ENCODE measurements at regions of chr2 and their contacts with region 1.

Region 1: GRCh38 chr2:160406591-160407392 is 86.8 kb downstream of the RBMS1 start:
- DNase-seq: peak; percentile 57
- H3K4me3 ChIP-seq: peak overlapping the region; percentile 90
- H3K4me3 Mint-ChIP-seq: peak overlapping the region; percentile 75
- H3K27ac Mint-ChIP-seq: peak overlapping the region; percentile 95
- H3K4me1 ChIP-seq: peaks cover 38% of the 10 kb centered on the region
- H3K4me1 Mint-ChIP-seq: peaks cover 48% of the 10 kb centered on the region
- H3K27me3 ChIP-seq: no peaks in the 10 kb centered on the region
- H3K27me3 Mint-ChIP-seq: no peaks in the 10 kb centered on the region
- CTCF ChIP-seq: no peak

Region 2: DNA sequence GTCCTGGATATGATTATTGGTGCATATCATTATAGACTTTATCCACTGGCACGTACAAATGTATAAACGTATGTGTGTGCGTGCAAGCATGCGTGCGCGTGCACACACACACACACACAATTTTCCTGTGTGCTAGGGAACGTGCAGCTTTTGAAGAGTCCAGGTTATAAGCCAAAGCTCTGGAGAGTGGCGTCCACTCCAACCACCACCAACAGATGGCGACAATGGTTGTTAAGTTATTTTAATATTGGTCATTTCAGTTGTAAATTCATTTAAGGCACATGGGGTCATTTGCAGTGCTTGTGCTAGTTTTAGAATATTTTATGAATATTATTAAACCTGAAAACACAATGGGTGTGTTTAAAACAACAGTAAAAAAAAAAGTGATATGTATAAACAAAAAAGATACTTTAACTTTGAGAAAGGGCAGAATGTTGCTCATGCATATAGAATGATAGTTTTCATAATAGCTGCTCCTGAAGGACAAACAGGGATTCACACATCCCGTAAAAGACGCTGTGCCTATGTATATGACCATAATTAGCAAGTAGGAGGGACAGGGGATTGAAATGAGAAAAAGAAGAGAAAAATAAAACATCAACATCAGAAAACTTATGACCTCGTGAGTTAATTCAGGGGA is 82.5 kb before region 1 on chr2:
- CTCF ChIA-PET with region 1: no interaction called
- POLR2A ChIA-PET with region 1: no interaction called
- intact Hi-C with region 1: loop called (anchors 2 kb)
- DNase-seq: peak; percentile 47 to 66
- H3K4me3 ChIP-seq: no peak overlapping the region
- H3K4me3 Mint-ChIP-seq: no peak overlapping the region
- H3K27ac Mint-ChIP-seq: no peak overlapping the region
- H3K4me1 ChIP-seq: peaks cover 13% of the 10 kb centered on the region
- H3K4me1 Mint-ChIP-seq: peaks cover 26% of the 10 kb centered on the region
- H3K27me3 ChIP-seq: no peaks in the 10 kb centered on the region
- H3K27me3 Mint-ChIP-seq: no peaks in the 10 kb centered on the region
- CTCF ChIP-seq: peak; percentile 70 to 74

Region 3: DNA sequence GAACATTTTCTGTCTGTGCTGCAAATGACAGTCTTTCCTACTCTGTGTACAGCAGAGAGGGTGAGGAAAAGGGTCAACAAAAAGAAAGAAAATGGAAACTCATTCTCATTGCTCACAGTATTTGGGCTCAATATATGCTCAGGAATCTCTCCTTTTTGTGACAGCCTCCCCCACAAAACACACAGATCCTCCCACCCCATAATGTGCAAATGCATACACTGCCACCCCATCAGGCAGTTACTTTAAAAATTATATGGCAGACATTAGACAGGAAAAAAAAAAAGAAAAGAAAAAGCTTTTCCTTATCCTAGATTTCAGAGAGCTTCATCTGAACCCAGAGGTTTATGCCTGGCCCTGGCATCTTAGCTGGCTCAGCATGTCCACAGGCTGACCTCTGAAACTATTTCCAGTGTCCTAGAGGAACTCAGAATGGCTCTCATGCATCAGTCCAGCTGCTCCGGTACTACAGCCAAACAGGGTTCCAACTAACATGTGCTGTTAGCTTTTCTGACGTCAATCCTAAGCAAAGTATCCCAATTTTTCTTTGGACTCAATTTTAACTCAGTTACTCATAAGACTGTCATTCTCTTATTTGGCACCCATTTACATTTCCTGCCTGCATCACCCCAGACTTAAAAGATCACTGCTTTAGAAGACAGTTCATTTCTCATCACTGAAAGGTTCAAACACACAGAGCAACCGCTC is 19.1 kb before region 1 on chr2:
- CTCF ChIA-PET with region 1: no interaction called
- POLR2A ChIA-PET with region 1: no interaction called
- intact Hi-C with region 1: no loop called
- DNase-seq: no peak
- H3K4me3 ChIP-seq: no peak overlapping the region
- H3K4me3 Mint-ChIP-seq: no peak overlapping the region
- H3K27ac Mint-ChIP-seq: no peak overlapping the region
- H3K4me1 ChIP-seq: no peaks in the 10 kb centered on the region
- H3K4me1 Mint-ChIP-seq: peaks cover 8% of the 10 kb centered on the region
- H3K27me3 ChIP-seq: no peaks in the 10 kb centered on the region
- H3K27me3 Mint-ChIP-seq: no peaks in the 10 kb centered on the region
- CTCF ChIP-seq: no peak

Measured in Caco-2 (cell line).